ENCODE measurements at regions of chr11 and their contacts with region 1.

Region 1: DNA sequence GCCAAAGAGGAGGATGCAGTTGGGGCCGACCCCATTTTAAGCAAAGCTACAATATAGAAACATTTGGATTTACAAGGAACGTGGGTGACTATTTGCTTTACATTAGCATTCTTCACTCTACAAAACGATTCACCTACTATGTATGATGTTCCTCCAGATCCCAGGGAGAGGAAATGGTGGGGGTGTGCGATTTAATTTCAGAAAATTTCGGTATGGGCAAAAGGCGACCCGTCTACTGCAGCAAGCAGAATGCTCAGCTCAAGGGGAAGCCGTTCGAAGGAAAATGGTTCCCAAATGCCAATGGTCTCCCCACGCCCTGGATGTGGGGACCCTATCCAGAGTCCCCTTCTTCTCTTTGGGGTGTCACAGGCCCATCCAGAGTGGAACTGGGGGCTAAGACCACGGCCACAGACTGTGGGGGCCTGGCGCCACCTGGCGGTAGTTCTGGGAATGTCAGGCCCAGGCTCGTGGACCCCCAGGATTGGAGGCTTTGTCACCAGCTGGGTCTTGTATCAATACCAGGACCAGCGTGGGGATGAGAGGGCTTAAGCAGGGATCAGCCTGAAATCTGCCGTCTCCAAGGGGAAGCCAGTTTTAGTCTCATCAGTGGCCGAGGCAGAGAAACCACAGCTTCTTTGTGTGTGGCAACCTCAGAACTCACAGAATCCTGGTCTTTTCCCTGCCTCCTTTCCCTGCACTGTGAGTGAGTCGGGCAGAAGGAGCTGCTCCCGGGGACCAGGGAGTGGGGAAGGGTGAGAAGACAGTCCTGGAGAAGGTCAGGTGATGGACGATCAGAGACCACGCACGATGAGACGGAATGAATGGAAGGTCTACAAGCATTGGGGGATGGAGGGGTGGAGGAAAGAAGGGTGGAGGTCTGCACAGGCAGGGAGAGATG is 8.4 kb downstream of the LRRC10B start:
- DNase-seq: peak in 1 of 2 donors; percentile 40
- ATAC-seq: peak; percentile 56 to 86 (median 65)
- H3K4me3 ChIP-seq: no peak overlapping the region
- H3K27ac ChIP-seq: no peak overlapping the region
- H3K4me1 ChIP-seq: no peaks in the 10 kb centered on the region
- H3K27me3 ChIP-seq: peaks cover 0 to 5% (median 2%) of the 10 kb centered on the region in 3 donors
- CTCF ChIP-seq: peak; percentile 97

Region 2: GRCh38 chr11:61446211-61446651 is 70.7 kb before region 1 on chr11:
- intact Hi-C with region 1: loop called (anchors 1 to 2 kb)
- DNase-seq: peak; percentile 93 to 97
- ATAC-seq: peak; percentile 83 to 87 (median 86)
- H3K4me3 ChIP-seq: no peak overlapping the region
- H3K27ac ChIP-seq: peak overlapping the region; percentile 89
- H3K4me1 ChIP-seq: peaks cover 51% of the 10 kb centered on the region
- H3K27me3 ChIP-seq: no peaks in the 10 kb centered on the region
- CTCF ChIP-seq: peak; percentile 88

Region 3: DNA sequence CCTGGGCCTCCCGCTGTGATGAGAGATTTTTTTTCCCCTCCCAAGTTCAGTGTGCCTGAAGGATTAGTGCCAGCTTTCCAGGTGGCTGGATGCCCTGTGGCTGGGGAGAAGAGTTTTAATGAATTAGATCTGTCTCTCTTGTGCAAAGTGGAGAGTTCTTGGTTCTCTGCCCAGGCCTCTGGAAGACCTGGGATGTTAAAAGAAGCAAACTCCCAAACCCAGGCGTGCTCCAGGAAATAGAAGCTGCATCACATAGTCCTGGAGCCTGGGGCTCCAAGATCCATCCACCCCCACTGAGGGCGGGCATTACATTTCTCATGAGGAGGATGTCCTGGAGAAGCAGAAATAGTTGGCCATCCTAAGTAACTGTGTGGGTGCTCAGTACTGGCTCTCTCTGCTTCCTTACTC is 56.4 kb before region 1 on chr11:
- intact Hi-C with region 1: no loop called
- DNase-seq: peak; percentile 71 to 73
- ATAC-seq: peak; percentile 31 to 61 (median 52)
- H3K4me3 ChIP-seq: no peak overlapping the region
- H3K27ac ChIP-seq: peak overlapping the region; percentile 46
- H3K4me1 ChIP-seq: peaks cover 19% of the 10 kb centered on the region
- H3K27me3 ChIP-seq: no peaks in the 10 kb centered on the region
- CTCF ChIP-seq: no peak

Region 4: DNA sequence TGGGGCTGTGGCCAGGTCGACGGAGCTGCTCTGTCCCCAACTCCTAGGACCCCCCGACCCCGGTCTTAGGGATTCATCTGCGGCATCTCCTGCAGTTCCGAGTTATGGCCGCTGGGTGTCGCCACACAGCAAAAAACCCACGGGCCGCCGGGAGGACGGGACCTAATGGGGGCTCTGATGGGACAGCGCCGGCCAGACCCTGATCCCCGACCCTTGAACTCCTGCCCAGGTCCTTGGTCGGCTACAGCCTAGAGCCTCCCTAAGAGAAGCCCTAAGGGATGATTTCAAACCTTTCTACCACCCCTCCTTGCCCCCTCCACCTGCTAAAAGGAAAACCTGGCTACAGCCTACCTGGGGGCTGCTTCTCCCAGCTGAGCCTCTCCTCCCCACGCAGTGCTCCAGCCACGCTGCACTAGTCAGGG is 39.2 kb before region 1 on chr11:
- intact Hi-C with region 1: loop called (anchors 1 to 2 kb)
- DNase-seq: peak; percentile 62 to 79
- ATAC-seq: peak; percentile 42 to 64 (median 55)
- H3K4me3 ChIP-seq: no peak overlapping the region
- H3K27ac ChIP-seq: no peak overlapping the region
- H3K4me1 ChIP-seq: peaks cover 11% of the 10 kb centered on the region
- H3K27me3 ChIP-seq: peaks cover 0 to 12% (median 7%) of the 10 kb centered on the region in 3 donors
- CTCF ChIP-seq: peak; percentile 96

Region 5: DNA sequence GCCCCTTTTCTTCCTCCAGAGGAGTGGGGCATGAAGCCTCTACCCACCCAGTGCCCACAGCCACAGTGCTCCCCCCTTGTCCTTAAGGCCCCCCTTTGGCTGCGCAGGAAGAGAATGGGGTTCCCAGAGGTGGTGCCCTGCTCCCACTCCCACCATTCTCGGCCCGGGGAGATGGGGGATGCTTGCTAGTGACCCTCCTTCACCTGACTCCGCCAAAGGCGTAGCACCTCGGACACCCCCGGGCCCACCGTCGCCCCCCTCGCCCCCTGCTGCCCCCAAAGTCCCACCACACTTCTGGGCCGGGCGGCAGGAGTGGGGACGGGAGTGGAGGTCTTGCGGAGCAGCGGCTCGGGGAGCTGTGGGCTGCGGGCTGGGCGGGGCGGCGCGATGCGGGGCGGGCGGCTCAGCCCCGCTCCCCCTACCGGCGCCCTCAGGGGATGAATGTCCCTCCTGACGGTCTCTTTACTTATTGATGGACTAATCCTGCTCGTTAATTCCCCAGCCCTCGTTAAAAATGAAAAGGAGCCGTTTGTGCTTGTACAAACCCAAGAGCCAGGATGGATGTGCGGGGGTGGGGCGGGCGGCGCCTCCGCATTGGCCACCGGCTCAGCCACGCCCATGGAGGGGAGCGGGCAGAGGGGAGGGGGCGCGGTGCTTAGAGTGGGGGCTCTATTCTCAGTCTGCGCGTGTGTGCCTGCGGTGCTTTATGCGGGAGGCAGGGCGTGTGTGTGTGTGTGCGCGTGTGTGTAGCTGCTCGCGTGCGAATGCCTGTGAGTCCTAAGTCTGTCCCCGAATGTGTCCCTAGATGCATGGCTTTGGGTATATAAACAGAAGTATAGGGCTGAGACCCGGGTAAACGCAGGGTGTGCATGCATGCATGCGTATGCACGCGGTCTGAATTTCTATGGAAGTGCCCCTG is 38.4 kb after region 1 on chr11:
- intact Hi-C with region 1: no loop called
- DNase-seq: no peak
- ATAC-seq: no peak
- H3K4me3 ChIP-seq: no peak overlapping the region
- H3K27ac ChIP-seq: no peak overlapping the region
- H3K4me1 ChIP-seq: no peaks in the 10 kb centered on the region
- H3K27me3 ChIP-seq: peaks cover 0 to 61% (median 14%) of the 10 kb centered on the region in 3 donors
- CTCF ChIP-seq: no peak